OCI-LY7 (cell line): ENCODE measurements at regions of chr2 and their contacts with region 1.

Region 1: DNA sequence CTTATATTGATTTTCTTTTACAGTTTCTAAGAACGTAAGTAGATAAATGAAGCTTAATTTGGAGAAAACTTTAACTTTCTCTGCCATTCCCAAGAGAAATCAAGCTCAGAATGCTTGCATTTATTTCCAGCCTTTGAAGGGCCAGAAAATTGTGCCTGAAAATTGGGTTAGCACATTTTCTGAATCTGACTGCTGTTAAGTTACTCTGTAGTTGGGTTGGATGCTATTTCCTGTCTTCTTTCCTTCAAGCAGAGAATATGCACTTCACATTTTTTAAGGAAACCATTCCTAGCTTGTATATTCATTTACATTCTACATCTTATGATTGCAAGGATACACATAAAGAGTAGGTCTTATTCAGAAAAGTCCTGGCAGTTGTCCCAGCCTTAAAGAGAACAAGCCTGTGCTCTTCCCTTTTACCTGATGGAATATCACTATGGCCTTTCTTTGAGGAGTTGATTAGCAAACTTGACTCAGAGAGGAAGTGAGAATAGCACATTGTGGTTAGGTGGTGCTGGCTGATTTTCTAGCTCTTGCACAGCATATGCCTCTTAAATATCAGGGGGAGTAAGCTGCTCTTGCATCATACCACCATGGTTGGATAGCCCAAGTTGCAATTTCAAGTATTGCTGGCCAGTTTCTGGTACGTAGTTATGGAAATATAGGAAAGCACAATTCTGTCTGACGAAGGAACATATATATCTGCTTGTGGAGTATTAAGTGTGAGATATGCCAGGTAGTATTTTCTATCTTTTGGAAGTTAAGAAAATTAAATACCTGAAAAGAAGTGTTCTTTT is 133.7 kb downstream of the COMMD1 start:
- DNase-seq: peak; percentile 94
- H3K4me3 ChIP-seq: peak overlapping the region; percentile 39
- H3K27ac ChIP-seq: peak overlapping the region; percentile 89
- H3K4me1 ChIP-seq: peaks cover 32% of the 10 kb centered on the region
- CTCF ChIP-seq: no peak

Region 2: GRCh38 chr2:61727746-61728145 is 311.4 kb before region 1 on chr2:
- CTCF ChIA-PET with region 1: no interaction called
- POLR2A ChIA-PET with region 1: no interaction called
- intact Hi-C with region 1: no loop called
- DNase-seq: no peak
- H3K4me3 ChIP-seq: no peak overlapping the region
- H3K27ac ChIP-seq: no peak overlapping the region
- H3K4me1 ChIP-seq: no peaks in the 10 kb centered on the region
- CTCF ChIP-seq: no peak

Region 3: GRCh38 chr2:62118160-62118559 is 79.0 kb after region 1 on chr2:
- CTCF ChIA-PET with region 1: no interaction called
- POLR2A ChIA-PET with region 1: no interaction called
- intact Hi-C with region 1: no loop called
- DNase-seq: peak; percentile 35
- H3K4me3 ChIP-seq: peak overlapping the region; percentile 7
- H3K27ac ChIP-seq: peak overlapping the region; percentile 44
- H3K4me1 ChIP-seq: peaks cover 69% of the 10 kb centered on the region
- CTCF ChIP-seq: no peak

Region 4: DNA sequence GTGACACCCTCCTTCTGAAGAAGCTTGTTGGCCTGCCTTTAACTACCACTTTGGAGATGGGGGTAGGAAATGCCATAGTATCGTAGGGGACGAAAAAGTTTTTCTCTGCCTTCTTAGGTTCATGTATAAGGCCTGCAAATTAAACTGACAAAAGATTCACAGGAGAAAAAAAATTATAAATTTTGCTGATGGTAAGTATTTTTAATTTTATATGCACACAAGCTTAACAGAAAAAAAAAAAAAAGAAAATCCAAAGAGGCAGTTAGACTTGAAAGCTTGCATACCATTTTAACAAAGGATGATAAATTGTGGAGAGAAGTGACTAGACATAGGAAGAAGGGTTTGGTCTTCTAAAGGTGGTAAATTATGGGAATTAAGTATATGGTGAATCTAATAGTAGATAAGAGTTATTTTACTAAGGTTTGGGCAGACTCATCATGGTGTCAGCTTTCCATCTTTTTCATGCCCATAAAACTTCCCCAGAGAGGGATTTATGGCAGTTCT is 94.2 kb after region 1 on chr2:
- CTCF ChIA-PET with region 1: no interaction called
- POLR2A ChIA-PET with region 1: interaction called, 5 read pairs
- intact Hi-C with region 1: loop called (anchors 5 kb)
- DNase-seq: no peak
- H3K4me3 ChIP-seq: no peak overlapping the region
- H3K27ac ChIP-seq: no peak overlapping the region
- H3K4me1 ChIP-seq: peaks cover 62% of the 10 kb centered on the region
- CTCF ChIP-seq: no peak

Region 5: DNA sequence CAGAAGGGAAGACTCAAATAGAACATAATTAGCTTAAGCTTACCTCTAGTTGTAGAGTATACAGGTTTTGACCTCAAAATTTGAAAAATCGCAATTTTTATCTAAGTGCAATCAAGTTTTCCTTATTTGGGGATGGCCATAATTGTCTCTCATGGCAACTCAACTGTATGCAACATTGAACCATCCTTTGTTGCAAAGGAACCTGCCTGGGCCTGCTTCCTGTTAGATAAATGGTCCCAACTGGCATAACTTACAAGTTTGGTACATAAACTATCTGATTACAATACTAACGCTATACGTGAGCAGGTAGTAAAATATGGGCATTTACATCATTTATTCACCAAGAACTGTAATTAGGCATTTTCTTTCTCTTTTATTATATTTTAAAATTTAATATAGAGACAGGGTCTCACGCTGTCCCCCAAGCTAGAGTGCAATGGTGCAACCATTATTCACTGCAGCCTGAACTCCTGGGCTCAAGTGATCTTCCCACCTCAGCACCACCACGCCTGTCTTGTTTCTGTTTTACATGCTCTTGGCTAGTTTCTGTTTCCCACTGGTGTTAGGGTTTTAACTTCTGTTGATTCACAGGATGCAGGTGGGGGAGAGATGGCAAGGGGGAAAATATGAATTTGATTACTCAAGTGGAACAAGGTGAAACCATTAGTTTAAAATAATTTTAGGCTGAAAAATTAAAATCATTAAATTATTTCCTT is 101.4 kb after region 1 on chr2:
- CTCF ChIA-PET with region 1: no interaction called
- POLR2A ChIA-PET with region 1: interaction called, 3 read pairs
- intact Hi-C with region 1: loop called (anchors 5 kb)
- DNase-seq: peak; percentile 84
- H3K4me3 ChIP-seq: peak overlapping the region; percentile 13
- H3K27ac ChIP-seq: peak overlapping the region; percentile 89
- H3K4me1 ChIP-seq: peaks cover 90% of the 10 kb centered on the region
- CTCF ChIP-seq: no peak